Panc1 (cell line): ENCODE measurements at regions of chr6 and their contacts with region 1.

Region 1: GRCh38 chr6:31862344-31863227 is at the start of gene NEU1:
- DNase-seq: peak; percentile 33
- ATAC-seq: peak; percentile 87
- H3K4me3 ChIP-seq: peak within 1 kb of the TSS; percentile 62 to 89
- H3K27ac ChIP-seq: peak within 1 kb of the TSS; percentile 82
- H3K4me1 ChIP-seq: peaks cover 26% of the 10 kb centered on the region
- H3K27me3 ChIP-seq: no peaks in the 10 kb centered on the region
- CTCF ChIP-seq: no peak
- total RNA-seq, gene NEU1: 111 TPM

Region 2: GRCh38 chr6:31834434-31835198 is 28.0 kb before region 1 on chr6:
- CTCF ChIA-PET with region 1: no interaction called
- POLR2A ChIA-PET with region 1: interaction called, 20 read pairs
- in situ Hi-C with region 1: no loop called
- intact Hi-C with region 1: no loop called
- DNase-seq: no peak
- ATAC-seq: peak; percentile 89
- H3K4me3 ChIP-seq: peak overlapping the region; percentile 77 to 95
- H3K27ac ChIP-seq: peak overlapping the region; percentile 95
- H3K4me1 ChIP-seq: peaks cover 30% of the 10 kb centered on the region
- H3K27me3 ChIP-seq: no peaks in the 10 kb centered on the region
- CTCF ChIP-seq: no peak

Region 3: GRCh38 chr6:31920811-31921210 is 58.2 kb after region 1 on chr6:
- CTCF ChIA-PET with region 1: interaction called, 10 read pairs
- POLR2A ChIA-PET with region 1: no interaction called
- in situ Hi-C with region 1: no loop called
- intact Hi-C with region 1: no loop called
- DNase-seq: no peak
- ATAC-seq: no peak
- H3K4me3 ChIP-seq: no peak overlapping the region
- H3K27ac ChIP-seq: no peak overlapping the region
- H3K4me1 ChIP-seq: no peaks in the 10 kb centered on the region
- H3K27me3 ChIP-seq: no peaks in the 10 kb centered on the region
- CTCF ChIP-seq: no peak

Region 4: DNA sequence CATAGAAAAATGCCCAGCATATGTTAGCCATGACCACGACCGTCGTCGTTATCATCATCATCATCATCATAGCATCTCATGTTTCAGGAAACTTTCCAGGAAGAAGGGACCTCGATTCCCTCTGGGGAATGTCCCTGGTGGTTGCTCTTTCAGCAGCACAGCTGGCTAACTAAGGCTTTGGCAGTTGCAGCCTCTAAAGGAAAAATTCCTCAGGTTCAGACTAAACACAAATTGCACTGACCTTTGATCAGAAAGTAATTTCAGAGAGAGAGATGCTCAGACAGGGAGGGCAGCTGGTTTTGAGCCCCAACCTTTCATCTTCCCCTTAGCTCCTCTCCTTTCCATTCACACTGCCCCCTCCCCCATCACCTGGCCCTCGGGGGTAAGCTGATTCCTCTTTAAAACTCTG is 77.7 kb after region 1 on chr6:
- CTCF ChIA-PET with region 1: interaction called, 3 read pairs
- POLR2A ChIA-PET with region 1: interaction called, 10 read pairs
- in situ Hi-C with region 1: no loop called
- intact Hi-C with region 1: no loop called
- DNase-seq: no peak
- ATAC-seq: no peak
- H3K4me3 ChIP-seq: no peak overlapping the region
- H3K27ac ChIP-seq: 0 out of 2 replicates have a peak overlapping the region, but pooled peaks have one; percentile 20
- H3K4me1 ChIP-seq: peaks cover 10% of the 10 kb centered on the region
- H3K27me3 ChIP-seq: no peaks in the 10 kb centered on the region
- CTCF ChIP-seq: no peak